ENCODE measurements at regions of chr3 and their contacts with region 1.

Region 1: DNA sequence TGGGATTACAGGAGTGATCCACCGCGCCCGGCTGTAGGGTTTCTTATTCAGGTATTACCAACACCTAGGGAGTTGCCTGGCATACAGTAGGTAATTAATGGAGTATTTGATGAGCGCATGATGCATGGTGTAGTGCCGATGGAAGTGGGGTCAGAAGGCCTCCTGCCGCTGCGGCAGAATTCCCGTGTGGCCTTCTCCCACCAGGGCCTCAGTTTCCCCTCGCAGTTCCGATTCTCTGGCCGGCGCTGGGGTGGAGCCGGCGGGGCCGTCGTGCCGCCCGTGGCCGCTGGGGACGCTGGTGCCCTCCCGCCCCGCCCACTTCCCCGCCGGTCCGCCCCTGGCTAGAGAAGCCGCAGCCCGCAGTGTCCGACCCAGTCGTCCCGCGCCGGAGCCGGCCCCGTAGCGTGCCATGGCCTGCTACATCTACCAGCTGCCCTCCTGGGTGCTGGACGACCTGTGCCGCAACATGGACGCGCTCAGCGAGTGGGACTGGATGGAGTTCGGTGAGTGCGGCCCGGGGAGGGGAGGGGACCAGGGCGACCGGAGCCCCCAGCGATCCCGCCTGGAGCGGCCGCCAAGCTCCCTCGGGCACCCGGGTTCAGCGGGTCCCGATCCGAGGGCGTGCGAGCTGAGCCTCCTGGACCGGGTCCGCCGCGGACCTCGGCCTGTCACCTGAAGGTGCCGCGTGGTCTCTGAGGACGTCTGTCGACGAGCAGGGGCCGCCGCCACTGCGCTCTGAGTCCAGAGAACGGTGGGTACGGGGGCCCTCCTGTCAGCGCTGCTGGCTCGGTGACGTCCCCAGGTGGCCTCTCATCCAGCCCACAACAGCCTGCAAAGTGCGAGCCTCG is at the start of gene IRAK2:
- DNase-seq: peak; percentile 83
- ATAC-seq: peak; percentile 91
- H3K4me3 ChIP-seq: peak within 1 kb of the TSS; percentile 66 to 95 (median 84)
- H3K4me3 Mint-ChIP-seq: peak within 1 kb of the TSS; percentile 91
- H3K27ac ChIP-seq: peak within 1 kb of the TSS; percentile 43 to 79
- H3K27ac Mint-ChIP-seq: peak within 1 kb of the TSS; percentile 65
- H3K4me1 ChIP-seq: peaks cover 15 to 44% of the 10 kb centered on the region in 2 donors
- H3K4me1 Mint-ChIP-seq: peaks cover 37% of the 10 kb centered on the region
- H3K27me3 ChIP-seq: no peaks in the 10 kb centered on the region
- H3K27me3 Mint-ChIP-seq: no peaks in the 10 kb centered on the region
- CTCF ChIP-seq: peak; percentile 98
- total RNA-seq, gene IRAK2: 23.2 and 24.6 TPM in 2 replicates

Region 2: GRCh38 chr3:10142707-10143566 is 21.8 kb before region 1 on chr3:
- CTCF ChIA-PET with region 1: interaction called, 5 read pairs
- POLR2A ChIA-PET with region 1: interaction called, 3 read pairs
- intact Hi-C with region 1: loop called (anchors 2 kb)
- DNase-seq: peak; percentile 31
- ATAC-seq: no peak
- H3K4me3 ChIP-seq: peak overlapping the region; percentile 8 to 91 (median 77)
- H3K4me3 Mint-ChIP-seq: peak overlapping the region; percentile 95
- H3K27ac ChIP-seq: peak overlapping the region; percentile 88 to 96
- H3K27ac Mint-ChIP-seq: peak overlapping the region; percentile 97
- H3K4me1 ChIP-seq: peaks cover 28 to 50% of the 10 kb centered on the region in 2 donors
- H3K4me1 Mint-ChIP-seq: peaks cover 32% of the 10 kb centered on the region
- H3K27me3 ChIP-seq: no peaks in the 10 kb centered on the region
- H3K27me3 Mint-ChIP-seq: no peaks in the 10 kb centered on the region
- CTCF ChIP-seq: no peak

Region 3: GRCh38 chr3:10180738-10181295 is 16.0 kb after region 1 on chr3:
- CTCF ChIA-PET with region 1: interaction called, 4 read pairs
- POLR2A ChIA-PET with region 1: no interaction called
- intact Hi-C with region 1: loop called (anchors 2 kb)
- DNase-seq: no peak
- ATAC-seq: no peak
- H3K4me3 ChIP-seq: no peak overlapping the region
- H3K4me3 Mint-ChIP-seq: peak overlapping the region; percentile 70
- H3K27ac ChIP-seq: peak overlapping the region; percentile 12 to 66
- H3K27ac Mint-ChIP-seq: peak overlapping the region; percentile 84
- H3K4me1 ChIP-seq: peaks cover 18 to 31% of the 10 kb centered on the region in 2 donors
- H3K4me1 Mint-ChIP-seq: peaks cover 28% of the 10 kb centered on the region
- H3K27me3 ChIP-seq: no peaks in the 10 kb centered on the region
- H3K27me3 Mint-ChIP-seq: no peaks in the 10 kb centered on the region
- CTCF ChIP-seq: no peak

Region 4: DNA sequence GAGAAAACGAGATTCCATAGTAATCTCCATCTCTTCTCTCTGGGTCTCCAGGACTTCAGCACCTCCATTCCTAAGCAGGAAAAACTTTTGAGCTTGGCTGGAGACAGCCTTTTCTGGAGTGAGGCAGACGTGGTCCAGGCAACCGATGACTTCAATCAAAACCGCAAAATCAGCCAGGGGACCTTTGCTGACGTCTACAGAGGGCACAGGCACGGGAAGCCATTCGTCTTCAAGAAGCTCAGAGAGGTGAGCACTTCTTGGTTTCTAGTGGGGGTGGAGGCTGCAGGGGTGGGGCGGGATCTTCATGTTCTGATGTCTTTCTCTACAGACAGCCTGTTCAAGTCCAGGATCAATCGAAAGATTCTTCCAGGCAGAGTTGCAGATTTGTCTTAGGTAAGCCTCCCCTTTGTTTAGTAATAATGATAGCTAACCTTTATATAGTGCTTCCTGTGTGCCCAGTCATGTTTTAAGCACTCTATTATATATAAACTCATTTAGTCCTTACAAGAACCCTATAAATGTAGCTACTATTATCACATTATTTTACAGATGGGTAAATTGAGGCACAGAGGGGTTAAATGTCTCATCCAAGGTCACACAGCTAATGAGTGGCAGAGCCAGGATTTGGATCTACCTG is 48.5 kb after region 1 on chr3:
- CTCF ChIA-PET with region 1: interaction called, 4 read pairs
- POLR2A ChIA-PET with region 1: interaction called, 13 read pairs
- intact Hi-C with region 1: no loop called
- DNase-seq: peak; percentile 65
- ATAC-seq: peak; percentile 87
- H3K4me3 ChIP-seq: no peak overlapping the region
- H3K4me3 Mint-ChIP-seq: peak overlapping the region; percentile 72
- H3K27ac ChIP-seq: no peak overlapping the region
- H3K27ac Mint-ChIP-seq: peak overlapping the region; percentile 71
- H3K4me1 ChIP-seq: peaks cover 13 to 30% of the 10 kb centered on the region in 2 donors
- H3K4me1 Mint-ChIP-seq: peaks cover 19% of the 10 kb centered on the region
- H3K27me3 ChIP-seq: no peaks in the 10 kb centered on the region
- H3K27me3 Mint-ChIP-seq: no peaks in the 10 kb centered on the region
- CTCF ChIP-seq: no peak